CD4-positive, alpha-beta memory T cell (primary cell): ENCODE measurements at regions of chr4 and their contacts with region 1.

Region 1: DNA sequence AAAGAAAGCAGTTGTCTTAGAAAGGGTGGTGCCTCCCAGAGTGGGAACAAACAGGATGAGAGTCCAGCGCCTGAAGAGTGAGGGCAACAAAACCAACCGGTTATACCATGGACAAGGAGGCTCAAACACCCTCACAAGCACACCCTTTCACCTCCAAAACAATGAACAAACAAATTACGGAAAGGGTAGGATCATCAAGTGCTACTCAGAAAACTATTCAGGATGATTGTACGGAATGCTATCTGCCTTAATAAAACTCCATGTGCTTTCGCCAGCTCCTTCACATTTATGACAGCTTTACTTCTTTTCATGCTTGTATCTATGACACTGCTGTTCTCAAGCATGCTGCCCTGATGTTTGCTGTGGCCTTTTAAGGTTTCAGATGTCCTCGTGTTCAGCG is 26.7 kb downstream of the SLC39A8 start:
- DNase-seq: no peak
- H3K4me3 ChIP-seq: no peak overlapping the region
- H3K4me3 Mint-ChIP-seq: no peak overlapping the region
- H3K27ac ChIP-seq: no peak overlapping the region
- H3K27ac Mint-ChIP-seq: no peak overlapping the region
- H3K4me1 ChIP-seq: no peaks in the 10 kb centered on the region
- H3K4me1 Mint-ChIP-seq: peaks cover 14 to 45% (median 31%) of the 10 kb centered on the region in 4 donors
- H3K27me3 ChIP-seq: no peaks in the 10 kb centered on the region
- H3K27me3 Mint-ChIP-seq: no peaks in the 10 kb centered on the region

Region 2: DNA sequence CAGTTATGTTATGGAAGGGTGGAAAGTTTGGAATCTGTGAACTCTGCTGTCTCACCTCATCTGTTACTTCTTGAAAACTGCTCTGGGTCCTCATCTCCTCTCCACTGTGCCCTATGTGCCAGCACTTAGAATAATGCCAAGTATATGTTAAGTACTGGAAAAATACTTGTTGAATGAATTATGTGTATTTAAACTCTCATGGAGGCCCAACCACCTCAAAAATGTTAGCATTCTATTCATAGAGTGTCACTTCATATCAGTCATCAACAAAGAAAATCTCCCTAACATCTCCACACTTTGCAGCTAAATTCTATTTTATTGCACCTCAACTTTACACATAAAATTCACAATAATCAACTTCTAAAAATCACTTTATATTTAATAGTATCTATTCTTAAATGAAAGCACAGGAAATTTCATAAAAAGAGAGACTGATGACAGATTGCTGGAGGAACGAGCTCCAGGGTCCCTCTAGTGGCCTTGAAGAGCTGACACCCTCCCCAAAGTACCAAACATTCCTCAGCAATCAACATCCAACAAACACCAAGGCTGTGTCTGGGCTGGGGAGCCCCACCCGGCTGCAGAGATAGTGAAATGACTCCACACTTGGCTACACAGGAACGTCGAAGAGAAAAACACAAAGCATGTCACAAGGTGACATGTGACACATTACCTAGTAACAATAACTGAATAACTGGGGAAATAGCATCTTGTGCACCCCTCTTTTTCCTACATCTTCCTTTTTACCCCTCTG is 19.0 kb before region 1 on chr4:
- CTCF ChIA-PET with region 1: interaction called, 11 read pairs
- POLR2A ChIA-PET with region 1: no interaction called
- intact Hi-C with region 1: no loop called
- DNase-seq: peak; percentile 10 to 36 (median 14)
- H3K4me3 ChIP-seq: no peak overlapping the region
- H3K4me3 Mint-ChIP-seq: no peak overlapping the region
- H3K27ac ChIP-seq: no peak overlapping the region
- H3K27ac Mint-ChIP-seq: peak overlapping the region in 1 of 7 donors; percentile 31
- H3K4me1 ChIP-seq: no peaks in the 10 kb centered on the region
- H3K4me1 Mint-ChIP-seq: peaks cover 0 to 4% (median 1%) of the 10 kb centered on the region in 4 donors
- H3K27me3 ChIP-seq: no peaks in the 10 kb centered on the region
- H3K27me3 Mint-ChIP-seq: no peaks in the 10 kb centered on the region

Region 3: GRCh38 chr4:102477657-102478056 is 159.1 kb after region 1 on chr4:
- CTCF ChIA-PET with region 1: no interaction called
- POLR2A ChIA-PET with region 1: no interaction called
- intact Hi-C with region 1: no loop called
- DNase-seq: no peak
- H3K4me3 ChIP-seq: no peak overlapping the region
- H3K4me3 Mint-ChIP-seq: no peak overlapping the region
- H3K27ac ChIP-seq: no peak overlapping the region
- H3K27ac Mint-ChIP-seq: no peak overlapping the region
- H3K4me1 ChIP-seq: no peaks in the 10 kb centered on the region
- H3K4me1 Mint-ChIP-seq: no peaks in the 10 kb centered on the region
- H3K27me3 ChIP-seq: no peaks in the 10 kb centered on the region
- H3K27me3 Mint-ChIP-seq: no peaks in the 10 kb centered on the region